ENCODE measurements at regions of chr5 and their contacts with region 1.

Region 1: DNA sequence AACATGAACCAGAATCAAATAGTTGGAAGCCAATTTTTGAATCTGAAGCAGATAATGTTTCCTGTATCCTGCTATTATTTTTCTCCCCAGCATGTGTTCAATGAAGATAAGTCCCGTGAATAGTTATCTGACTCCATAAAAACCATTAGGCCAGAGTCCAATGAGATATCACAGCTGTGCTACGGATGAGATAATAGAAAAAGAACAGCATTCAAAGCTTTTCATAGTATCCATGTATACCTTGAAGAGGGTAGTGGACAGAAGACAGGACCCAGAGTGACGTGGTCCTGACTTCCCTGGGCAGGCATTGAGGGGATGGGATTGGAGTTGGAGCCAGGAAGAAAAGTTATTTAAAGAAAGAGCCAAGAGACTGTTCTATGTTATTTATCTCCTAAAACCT is 50.7 kb upstream of the C6 start:
- DNase-seq: no peak
- ATAC-seq: peak; percentile 86

Region 2: GRCh38 chr5:40914835-40915234 is 349.2 kb before region 1 on chr5:
- intact Hi-C with region 1: loop called (anchors 5 kb)
- DNase-seq: no peak
- ATAC-seq: peak; percentile 45